ENCODE measurements at regions of chr10 and their contacts with region 1.

Region 1: GRCh38 chr10:29776246-29776645 is 141.5 kb upstream of the SVIL start:
- DNase-seq: no peak
- H3K4me3 ChIP-seq: no peak overlapping the region
- H3K27ac ChIP-seq: no peak overlapping the region
- H3K4me1 ChIP-seq: peaks cover 0 to 21% (median 15%) of the 10 kb centered on the region in 4 donors
- H3K27me3 ChIP-seq: no peaks in the 10 kb centered on the region
- CTCF ChIP-seq: no peak
- EP300 ChIP-seq: no peak
- POLR2A ChIP-seq: no peak

Region 2: DNA sequence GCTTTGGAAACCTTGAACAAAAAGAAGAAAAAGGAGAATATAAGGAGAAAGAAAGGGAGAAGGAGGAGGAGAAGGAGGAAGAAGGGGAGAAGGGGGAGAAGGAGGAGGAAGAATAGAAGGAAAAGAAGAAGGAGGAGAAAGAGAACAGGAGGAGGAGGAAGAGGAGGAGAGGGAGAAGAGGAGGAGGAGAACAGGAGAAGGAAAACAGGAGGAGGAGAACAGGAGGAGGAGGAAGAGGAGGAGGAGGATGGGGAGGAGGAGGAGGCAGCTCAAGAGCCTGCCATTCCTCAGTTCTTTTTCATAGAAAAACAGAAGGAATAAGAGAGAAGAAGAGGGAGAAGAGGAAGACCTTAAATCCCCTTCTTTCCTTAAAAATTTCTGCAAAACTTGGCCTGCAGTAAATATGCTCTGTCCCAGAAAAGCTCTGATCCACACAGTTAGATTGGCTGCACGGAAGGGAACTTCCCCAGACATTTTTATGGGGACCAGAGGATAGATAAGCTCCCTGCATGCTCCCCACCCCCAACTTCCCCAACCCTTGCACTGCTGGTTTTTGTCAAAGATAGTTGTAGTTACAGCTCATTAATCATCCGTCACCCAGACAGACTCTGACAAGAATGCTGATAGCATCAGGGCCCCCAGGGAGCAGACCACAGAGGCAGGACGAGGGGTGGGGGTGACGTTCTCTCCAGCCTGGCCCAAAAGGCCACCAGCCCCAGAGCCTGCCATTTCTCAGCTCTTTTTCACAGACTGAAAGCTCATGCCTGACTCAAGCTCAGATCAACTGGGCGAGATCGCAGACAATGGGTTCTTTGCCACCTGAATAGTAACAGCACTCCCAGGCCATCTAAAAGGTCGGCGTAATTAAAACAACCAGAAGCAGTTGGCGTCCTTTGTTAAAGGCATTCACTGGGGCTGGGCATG is 521.9 kb before region 1 on chr10:
- intact Hi-C with region 1: no loop called
- DNase-seq: no peak
- H3K4me3 ChIP-seq: no peak overlapping the region
- H3K27ac ChIP-seq: no peak overlapping the region
- H3K4me1 ChIP-seq: peaks cover 9 to 19% (median 11%) of the 10 kb centered on the region in 4 donors
- H3K27me3 ChIP-seq: peaks cover 0 to 44% (median 0%) of the 10 kb centered on the region in 4 donors
- CTCF ChIP-seq: no peak
- EP300 ChIP-seq: no peak
- POLR2A ChIP-seq: no peak

Region 3: DNA sequence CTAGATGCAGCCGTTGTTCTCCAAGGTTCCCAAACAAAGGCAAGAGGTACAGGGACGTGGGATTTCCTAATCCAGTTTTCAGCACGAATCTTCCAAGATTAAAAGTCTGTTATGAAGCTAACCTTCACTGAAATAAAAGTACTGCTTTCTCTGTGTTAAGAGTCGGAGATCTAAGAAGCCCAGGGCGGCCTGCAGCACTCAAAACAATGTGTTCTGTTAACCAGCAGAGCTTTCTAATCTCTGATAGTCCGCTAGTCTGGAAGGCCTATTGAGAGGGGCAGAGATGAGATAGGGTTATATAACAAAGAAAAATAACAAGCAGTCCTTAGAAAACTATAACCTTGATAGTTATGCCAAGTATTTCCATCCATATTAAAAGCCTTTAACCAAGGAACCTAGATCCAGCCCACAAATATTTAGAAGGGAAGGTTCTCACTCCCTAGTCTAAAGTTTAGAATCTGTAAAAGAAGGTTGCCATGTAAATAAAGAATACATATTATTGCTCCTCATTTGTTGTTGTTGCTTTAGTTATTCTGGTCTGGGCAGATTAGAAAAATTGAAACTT is 35.2 kb before region 1 on chr10:
- intact Hi-C with region 1: loop called (anchors 5 kb)
- DNase-seq: no peak
- H3K4me3 ChIP-seq: no peak overlapping the region
- H3K27ac ChIP-seq: peak overlapping the region; percentile 51 to 60 (median 56)
- H3K4me1 ChIP-seq: peaks cover 2 to 24% (median 19%) of the 10 kb centered on the region in 4 donors
- H3K27me3 ChIP-seq: no peaks in the 10 kb centered on the region
- CTCF ChIP-seq: no peak
- EP300 ChIP-seq: no peak
- POLR2A ChIP-seq: no peak